ENCODE measurements at regions of chr2 and their contacts with region 1.

Region 1: GRCh38 chr2:118855451-118856279 is 8.2 kb upstream of the EN1 start:
- DNase-seq: peak; percentile 84
- H3K4me3 ChIP-seq: peak overlapping the region in 2 of 4 donors; percentile 23 to 27
- H3K27ac ChIP-seq: no peak overlapping the region
- H3K4me1 ChIP-seq: peaks cover 0 to 58% (median 41%) of the 10 kb centered on the region in 4 donors
- H3K27me3 ChIP-seq: peaks cover 66 to 100% (median 90%) of the 10 kb centered on the region in 3 donors
- CTCF ChIP-seq: peak; percentile 78 to 98 (median 92)
- EP300 ChIP-seq: no peak
- POLR2A ChIP-seq: no peak

Region 2: GRCh38 chr2:118046634-118047210 is 808.9 kb before region 1 on chr2:
- intact Hi-C with region 1: loop called (anchors 2 kb)
- DNase-seq: no peak
- H3K4me3 ChIP-seq: no peak overlapping the region
- H3K27ac ChIP-seq: no peak overlapping the region
- H3K4me1 ChIP-seq: peaks cover 0 to 3% (median 0%) of the 10 kb centered on the region in 4 donors
- H3K27me3 ChIP-seq: peaks cover 0 to 45% (median 13%) of the 10 kb centered on the region in 3 donors
- CTCF ChIP-seq: peak in 3 of 4 experiments; percentile 21 to 56 (median 40)
- EP300 ChIP-seq: no peak
- POLR2A ChIP-seq: no peak

Region 3: DNA sequence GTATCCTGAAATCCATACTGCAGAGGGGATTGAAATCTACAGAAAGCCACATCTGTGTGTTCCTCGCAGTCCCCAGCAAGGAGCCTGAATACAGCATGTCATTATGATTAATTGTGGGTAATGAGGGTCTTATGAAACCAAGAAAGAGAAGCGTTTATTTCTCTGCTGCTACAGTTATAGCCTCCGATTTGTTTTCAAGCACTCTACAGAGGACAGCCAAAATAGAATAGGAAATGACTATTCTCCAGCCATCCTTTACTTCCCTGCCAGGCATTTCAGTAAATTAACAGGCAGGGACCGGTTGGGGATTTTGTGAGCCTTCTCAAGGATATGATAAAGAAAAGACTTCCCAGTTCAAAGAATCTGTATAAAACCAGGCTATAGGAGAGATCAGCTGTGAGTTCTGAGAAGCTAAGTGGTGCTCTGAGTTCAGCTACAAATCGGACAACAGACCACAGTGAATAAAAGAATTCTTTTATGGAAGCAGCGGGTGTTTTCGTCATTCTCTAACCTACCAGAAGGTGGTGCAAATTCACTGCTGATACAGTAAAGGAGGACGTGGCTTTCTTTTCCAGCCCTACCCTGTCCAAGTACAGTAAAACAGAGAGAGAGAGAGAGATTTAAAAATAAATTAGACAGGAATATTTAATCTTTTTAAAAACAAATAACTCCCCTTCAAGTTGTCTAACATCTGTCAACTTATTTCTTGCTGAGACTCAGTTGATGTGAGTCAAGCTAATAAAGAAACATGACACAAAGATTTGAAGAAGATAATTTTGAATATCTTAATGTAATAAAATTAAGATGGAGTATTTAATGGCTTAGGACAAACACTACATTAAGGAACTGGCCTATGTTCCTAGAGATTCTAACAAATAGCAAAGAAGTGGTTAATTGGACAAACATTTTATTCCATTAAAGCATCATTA is 633.7 kb before region 1 on chr2:
- intact Hi-C with region 1: loop called (anchors 2 kb)
- DNase-seq: no peak
- H3K4me3 ChIP-seq: no peak overlapping the region
- H3K27ac ChIP-seq: no peak overlapping the region
- H3K4me1 ChIP-seq: peaks cover 0 to 15% (median 14%) of the 10 kb centered on the region in 4 donors
- H3K27me3 ChIP-seq: peaks cover 41 to 89% (median 49%) of the 10 kb centered on the region in 3 donors
- CTCF ChIP-seq: peak in 3 of 4 experiments; percentile 51 to 56 (median 53)
- EP300 ChIP-seq: no peak
- POLR2A ChIP-seq: no peak

Region 4: DNA sequence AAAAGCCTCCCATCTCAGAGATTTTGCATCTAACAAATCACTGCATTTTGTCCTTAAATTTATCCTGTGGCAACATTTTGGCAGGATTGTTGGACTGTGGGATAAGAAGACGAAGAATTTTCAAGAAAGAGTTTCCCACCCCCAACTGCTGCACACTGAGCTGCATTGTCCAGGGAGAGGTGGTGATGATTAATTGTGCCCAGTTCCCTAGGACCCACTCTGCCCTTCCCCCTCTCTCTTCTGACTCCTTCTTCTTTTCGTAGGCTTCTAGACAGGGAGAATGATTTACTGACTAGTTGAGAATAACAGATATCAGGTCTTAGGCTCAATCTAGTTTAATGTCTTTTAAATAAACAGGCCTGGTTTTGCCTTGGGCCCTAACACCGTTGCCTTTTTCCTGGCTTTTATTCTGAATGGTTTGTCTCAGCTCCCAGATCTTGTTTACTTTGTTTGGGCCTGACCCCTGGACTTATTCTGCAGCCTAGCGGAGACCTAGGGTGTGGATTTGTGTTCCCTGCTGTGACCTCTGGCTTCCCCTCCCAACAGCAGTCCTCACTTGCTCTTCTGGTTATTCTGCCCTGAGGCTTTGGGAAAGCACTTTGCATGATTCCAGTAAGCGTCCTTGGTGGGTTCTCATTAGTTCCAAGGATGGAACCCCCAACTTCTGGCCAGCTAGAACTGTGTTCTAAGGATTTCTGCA is 534.1 kb before region 1 on chr2:
- intact Hi-C with region 1: loop called (anchors 5 kb)
- DNase-seq: no peak
- H3K4me3 ChIP-seq: no peak overlapping the region
- H3K27ac ChIP-seq: no peak overlapping the region
- H3K4me1 ChIP-seq: no peaks in the 10 kb centered on the region
- H3K27me3 ChIP-seq: peaks cover 0 to 11% (median 0%) of the 10 kb centered on the region in 3 donors
- CTCF ChIP-seq: no peak
- EP300 ChIP-seq: no peak
- POLR2A ChIP-seq: no peak

Region 5: GRCh38 chr2:119371111-119371510 is 515.4 kb after region 1 on chr2:
- intact Hi-C with region 1: no loop called
- DNase-seq: peak; percentile 76
- H3K4me3 ChIP-seq: no peak overlapping the region
- H3K27ac ChIP-seq: peak overlapping the region in 1 of 4 donors; percentile 47
- H3K4me1 ChIP-seq: peaks cover 0 to 14% (median 12%) of the 10 kb centered on the region in 4 donors
- H3K27me3 ChIP-seq: no peaks in the 10 kb centered on the region
- CTCF ChIP-seq: no peak
- EP300 ChIP-seq: no peak
- POLR2A ChIP-seq: no peak